A549 (cell line): ENCODE measurements at regions of chr19 and their contacts with region 1.

Region 1: GRCh38 chr19:13861732-13862531 is 15.0 kb upstream of the NANOS3 start:
- DNase-seq: peak in 1 of 2 experiments; percentile 90
- ATAC-seq: peak; percentile 81 to 88
- H3K4me3 ChIP-seq: peak overlapping the region; percentile 33
- H3K27ac ChIP-seq: peak overlapping the region; percentile 92 to 96
- H3K4me1 ChIP-seq: peaks cover 63% of the 10 kb centered on the region
- CTCF ChIP-seq: peak; percentile 76
- EP300 ChIP-seq: peak; percentile 51 to 73; a peak in 2 of 5 replicates
- POLR2A ChIP-seq: no peak
- RAD21 ChIP-seq: peak; percentile 92 to 95

Region 2: DNA sequence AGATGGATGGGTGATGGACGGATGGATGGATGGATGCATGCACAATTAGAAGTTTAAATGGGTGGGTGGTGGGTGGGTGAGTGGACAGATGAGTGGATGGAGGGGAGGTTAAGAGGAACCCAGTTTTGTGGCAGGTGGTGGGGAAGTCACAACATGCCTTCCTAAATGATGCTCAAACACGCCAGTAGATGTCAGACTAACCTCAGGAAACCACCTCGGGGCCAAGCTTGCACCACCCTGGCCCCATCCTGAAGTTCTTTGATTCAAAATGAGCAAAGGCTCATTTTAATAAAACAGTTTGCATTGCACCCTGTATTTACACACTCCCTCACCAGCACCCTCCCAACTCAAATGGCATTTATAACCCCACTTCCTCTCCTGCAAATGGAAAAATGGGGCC is 264.3 kb before region 1 on chr19:
- CTCF ChIA-PET with region 1: interaction called, 10 read pairs
- POLR2A ChIA-PET with region 1: no interaction called
- DNase-seq: peak; percentile 60 to 71
- ATAC-seq: peak; percentile 82 to 89; a peak in 5 of 6 replicates
- H3K4me3 ChIP-seq: no peak overlapping the region
- H3K27ac ChIP-seq: no peak overlapping the region
- H3K4me1 ChIP-seq: no peaks in the 10 kb centered on the region
- CTCF ChIP-seq: peak; percentile 63
- EP300 ChIP-seq: no peak
- POLR2A ChIP-seq: no peak
- RAD21 ChIP-seq: peak; percentile 88 to 92

Region 3: DNA sequence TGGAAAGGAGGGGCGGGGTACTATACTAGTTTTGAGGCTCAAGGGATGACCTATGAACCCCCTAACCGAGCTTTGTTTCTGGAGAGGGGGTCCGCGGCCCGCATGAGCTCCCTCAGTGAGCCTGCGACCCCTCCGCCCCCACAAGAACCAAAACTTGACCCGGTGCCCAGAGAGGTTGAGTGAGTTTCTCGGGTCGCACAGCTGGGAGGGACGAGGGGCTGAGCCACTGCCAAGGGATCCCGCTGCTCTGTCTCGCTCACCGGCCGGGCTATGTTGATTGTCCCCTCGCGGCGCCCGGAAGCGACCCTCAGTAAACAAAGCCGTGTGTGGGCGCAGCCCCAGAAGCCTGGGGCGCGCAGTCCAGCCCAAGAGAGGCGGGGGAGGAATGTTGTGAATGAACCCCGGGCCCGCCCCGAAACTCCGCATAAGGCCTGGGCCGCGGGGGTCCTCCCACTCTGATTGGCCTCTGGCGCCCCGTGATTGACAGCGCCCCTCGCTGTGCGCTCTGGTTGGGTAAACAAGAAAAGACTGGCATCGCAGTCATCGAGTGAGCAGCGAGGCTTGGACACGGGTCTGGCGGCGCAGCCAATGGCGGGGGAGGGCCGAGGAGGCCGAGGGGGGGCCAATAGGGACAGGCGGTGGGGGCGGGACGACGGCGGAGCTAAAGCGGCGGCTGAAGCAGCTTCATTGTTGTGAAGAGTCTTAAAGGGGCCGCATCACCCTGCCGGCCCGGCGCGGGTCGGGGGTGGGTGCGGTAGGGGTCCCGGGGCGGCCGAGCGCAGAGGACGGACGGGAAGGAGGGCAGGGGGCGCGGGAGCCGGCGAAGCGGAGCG is 67.0 kb before region 1 on chr19 and contains the start of gene ZSWIM4:
- CTCF ChIA-PET with region 1: interaction called, 40 read pairs
- POLR2A ChIA-PET with region 1: interaction called, 11 read pairs
- DNase-seq: peak; percentile 86 to 97
- ATAC-seq: peak; percentile 94
- H3K4me3 ChIP-seq: peak within 1 kb of the TSS; percentile 99
- H3K27ac ChIP-seq: peak within 1 kb of the TSS; percentile 96 to 97
- H3K4me1 ChIP-seq: peaks cover 27% of the 10 kb centered on the region
- CTCF ChIP-seq: no peak
- EP300 ChIP-seq: no peak
- POLR2A ChIP-seq: no peak
- RAD21 ChIP-seq: no peak
- polyA plus RNA-seq, gene ZSWIM4: 1.6 and 1.7 TPM in 2 replicates

Region 4: GRCh38 chr19:13839130-13839937 is 22.6 kb before region 1 on chr19:
- CTCF ChIA-PET with region 1: interaction called, 271 read pairs
- POLR2A ChIA-PET with region 1: interaction called, 41 read pairs
- DNase-seq: peak in 1 of 2 experiments; percentile 57
- ATAC-seq: peak in 1 of 2 experiments; percentile 9; a peak in 3 of 6 replicates
- H3K4me3 ChIP-seq: peak overlapping the region; percentile 95
- H3K27ac ChIP-seq: peak overlapping the region; percentile 100
- H3K4me1 ChIP-seq: peaks cover 57% of the 10 kb centered on the region
- CTCF ChIP-seq: no peak
- EP300 ChIP-seq: no peak
- POLR2A ChIP-seq: no peak
- RAD21 ChIP-seq: no peak

Region 5: GRCh38 chr19:13872695-13873389 is 10.9 kb after region 1 on chr19:
- CTCF ChIA-PET with region 1: interaction called, 22 read pairs
- POLR2A ChIA-PET with region 1: interaction called, 4 read pairs
- DNase-seq: peak; percentile 47 to 71
- ATAC-seq: peak; percentile 87 to 90
- H3K4me3 ChIP-seq: peak overlapping the region; percentile 69
- H3K27ac ChIP-seq: peak overlapping the region; percentile 87 to 99
- H3K4me1 ChIP-seq: peaks cover 16% of the 10 kb centered on the region; the same call in 2 of the 3 replicates
- CTCF ChIP-seq: peak; percentile 37; the same call in 2 of the 3 replicates
- EP300 ChIP-seq: no peak
- POLR2A ChIP-seq: no peak
- RAD21 ChIP-seq: peak; percentile 24 to 42; a peak in 4 of 5 replicates